Right ventricle myocardium inferior (tissue), 1 donor: ENCODE measurements at regions of chr5 and their contacts with region 1.

Region 1: GRCh38 chr5:113513384-113514288 is at the start of gene YTHDC2:
- DNase-seq: peak; percentile 94
- ATAC-seq: peak; percentile 98
- total RNA-seq, gene YTHDC2: 12.6 TPM

Region 2: GRCh38 chr5:112995764-112996618 is 517.6 kb before region 1 on chr5:
- intact Hi-C with region 1: loop called (anchors 5 kb)
- DNase-seq: no peak
- ATAC-seq: peak; percentile 83

Region 3: GRCh38 chr5:113336975-113337374 is 176.7 kb before region 1 on chr5:
- intact Hi-C with region 1: loop called (anchors 2 kb)
- DNase-seq: no peak
- ATAC-seq: peak; percentile 87

Region 4: DNA sequence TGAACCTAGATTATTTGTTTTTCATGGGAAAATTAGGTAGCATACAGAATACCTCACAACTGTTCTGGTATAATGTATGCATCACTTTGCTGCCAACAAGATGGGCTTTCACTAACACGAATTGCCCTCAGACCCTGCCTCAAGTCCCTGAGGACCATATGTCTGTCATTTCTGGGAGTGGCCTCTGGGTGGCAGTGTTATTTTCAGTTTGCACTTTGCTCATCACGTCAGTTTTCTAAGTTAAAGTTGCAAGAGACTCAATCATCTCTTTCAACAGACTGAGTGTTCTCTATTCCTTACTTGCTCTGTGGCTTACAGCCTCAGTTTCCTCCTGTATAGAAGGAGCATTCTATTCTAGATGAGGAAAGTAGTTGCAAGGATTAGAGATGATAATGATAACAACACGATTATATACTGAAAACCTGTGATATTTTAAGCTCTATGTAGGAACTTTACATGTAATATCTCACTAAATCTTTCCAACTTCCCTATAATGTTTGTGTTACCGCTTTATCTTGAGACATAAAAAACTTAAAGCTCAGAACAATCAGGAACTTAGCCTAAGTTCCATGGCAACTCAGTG is 134.6 kb before region 1 on chr5:
- intact Hi-C with region 1: loop called (anchors 2 kb)
- DNase-seq: no peak
- ATAC-seq: peak; percentile 45

Region 5: DNA sequence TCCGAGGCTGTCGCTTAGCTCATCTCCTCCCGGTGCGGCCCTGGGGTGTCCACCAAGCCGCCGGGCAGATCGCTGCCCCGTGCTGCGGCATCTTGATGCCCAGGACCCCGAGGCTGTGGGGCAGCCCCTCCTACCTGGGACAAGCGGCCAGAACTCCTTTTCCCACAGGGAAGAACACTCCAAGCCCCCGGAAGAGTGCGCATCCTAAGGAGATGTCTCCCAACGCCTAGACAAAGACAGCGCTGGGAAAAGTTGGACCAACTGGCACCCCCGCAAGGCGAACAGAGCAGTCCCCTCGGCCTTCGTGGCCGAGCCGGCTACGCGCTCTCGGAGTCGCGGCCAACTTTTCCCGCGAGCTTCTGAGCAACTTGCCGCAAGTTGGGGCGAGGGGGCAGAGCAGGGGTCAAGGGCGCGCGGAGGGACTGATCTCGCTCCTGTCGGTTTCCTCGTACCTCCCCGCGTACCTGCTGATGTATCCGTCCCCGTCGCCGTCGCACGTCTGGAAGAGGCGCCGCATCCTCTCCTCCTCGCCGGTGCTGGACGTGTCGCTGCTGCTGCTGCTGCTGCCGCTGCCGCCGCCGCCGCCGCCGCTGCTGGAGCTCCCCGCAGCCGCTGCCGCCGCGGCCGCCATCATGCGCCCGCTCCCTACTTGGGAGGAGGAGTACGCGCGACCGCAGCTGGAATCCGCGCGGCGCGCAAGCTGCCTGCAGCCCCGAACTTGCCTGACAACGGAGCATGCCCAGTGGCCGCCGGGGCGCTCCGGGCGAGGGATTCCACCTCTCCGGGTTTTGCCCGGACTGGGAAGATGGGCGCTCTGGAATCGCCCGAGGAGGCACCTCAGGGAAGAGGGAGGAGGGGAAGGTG is 25.6 kb before region 1 on chr5 and contains the start of gene MCC:
- intact Hi-C with region 1: no loop called
- DNase-seq: peak; percentile 81
- ATAC-seq: peak; percentile 88
- total RNA-seq, gene MCC: 31.9 TPM

Region 6: GRCh38 chr5:113703266-113703665 is 189.6 kb after region 1 on chr5:
- intact Hi-C with region 1: no loop called
- DNase-seq: no peak
- ATAC-seq: no peak